Aorta (tissue), 5 donors: ENCODE measurements at regions of chr5 and their contacts with region 1.

Region 1: DNA sequence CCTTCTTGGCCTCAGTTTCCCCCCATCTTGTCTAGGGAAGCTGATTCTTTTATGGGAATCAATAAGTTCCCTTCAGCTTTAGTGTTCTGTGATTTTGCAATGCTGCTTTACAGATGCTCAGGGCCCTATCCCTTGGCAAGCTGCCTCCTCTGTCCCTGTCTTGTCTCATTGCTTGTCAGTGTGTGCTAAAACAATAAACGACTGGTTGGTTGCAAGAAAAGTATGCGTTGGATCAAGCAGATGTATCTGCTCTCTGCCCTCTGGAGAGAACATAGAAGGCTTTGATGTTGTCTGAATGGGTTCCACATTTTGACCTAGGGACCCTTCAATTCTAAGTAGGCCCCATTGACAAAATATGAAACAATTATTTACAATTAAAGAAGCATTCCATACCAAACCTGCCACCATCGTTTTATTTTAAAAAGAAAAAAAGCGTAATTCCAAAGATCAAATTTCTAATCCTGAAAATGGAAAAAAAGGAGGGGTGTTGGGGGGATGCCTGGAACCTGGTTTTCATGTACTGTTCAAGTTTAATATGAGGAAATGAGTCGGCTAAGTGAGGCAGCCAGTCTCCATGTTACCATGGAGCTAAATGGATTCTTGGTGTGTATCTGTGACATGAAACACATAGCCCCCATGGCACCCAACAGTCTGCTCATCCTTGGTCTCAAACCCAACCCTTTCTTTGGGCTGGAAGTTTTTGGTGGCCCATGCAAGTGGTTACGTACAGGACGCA is 31.2 kb upstream of the TARS1 start:
- DNase-seq: no peak
- ATAC-seq: peak; percentile 51
- H3K4me3 ChIP-seq: no peak overlapping the region
- H3K27ac ChIP-seq: no peak overlapping the region
- H3K4me1 ChIP-seq: no peaks in the 10 kb centered on the region
- H3K27me3 ChIP-seq: no peaks in the 10 kb centered on the region

Region 2: DNA sequence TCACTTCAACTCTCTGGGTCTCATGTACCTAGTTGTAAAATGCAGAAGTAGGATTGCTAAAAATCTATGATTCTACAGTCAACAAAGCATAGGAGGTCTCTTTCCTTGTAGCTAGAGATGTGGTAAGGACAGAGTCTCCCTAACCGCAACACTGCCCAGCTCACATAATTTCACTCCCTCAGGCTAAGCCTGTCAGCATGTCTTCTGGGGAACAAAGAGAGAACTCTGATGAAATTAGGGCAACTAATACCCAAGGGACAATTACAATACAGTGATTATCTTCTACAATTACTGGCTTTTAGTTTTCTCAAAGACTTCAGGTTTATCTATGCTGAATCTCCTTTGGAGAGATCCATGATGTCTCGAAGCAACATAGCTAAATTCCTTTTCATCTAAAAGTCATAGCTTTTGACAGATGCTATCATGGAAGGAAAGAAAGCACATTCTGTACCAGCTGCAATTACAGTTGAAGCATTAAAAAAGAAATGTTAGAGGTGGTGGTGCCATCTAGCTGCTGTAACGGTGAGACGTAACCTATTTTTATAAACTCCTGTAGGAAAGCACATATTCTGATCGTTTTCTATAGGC is 109.9 kb before region 1 on chr5:
- intact Hi-C with region 1: loop called in 1 of 2 experiments (anchors 10 kb)
- DNase-seq: no peak
- ATAC-seq: peak; percentile 74
- H3K4me3 ChIP-seq: no peak overlapping the region
- H3K27ac ChIP-seq: no peak overlapping the region
- H3K4me1 ChIP-seq: no peaks in the 10 kb centered on the region
- H3K27me3 ChIP-seq: no peaks in the 10 kb centered on the region

Region 3: DNA sequence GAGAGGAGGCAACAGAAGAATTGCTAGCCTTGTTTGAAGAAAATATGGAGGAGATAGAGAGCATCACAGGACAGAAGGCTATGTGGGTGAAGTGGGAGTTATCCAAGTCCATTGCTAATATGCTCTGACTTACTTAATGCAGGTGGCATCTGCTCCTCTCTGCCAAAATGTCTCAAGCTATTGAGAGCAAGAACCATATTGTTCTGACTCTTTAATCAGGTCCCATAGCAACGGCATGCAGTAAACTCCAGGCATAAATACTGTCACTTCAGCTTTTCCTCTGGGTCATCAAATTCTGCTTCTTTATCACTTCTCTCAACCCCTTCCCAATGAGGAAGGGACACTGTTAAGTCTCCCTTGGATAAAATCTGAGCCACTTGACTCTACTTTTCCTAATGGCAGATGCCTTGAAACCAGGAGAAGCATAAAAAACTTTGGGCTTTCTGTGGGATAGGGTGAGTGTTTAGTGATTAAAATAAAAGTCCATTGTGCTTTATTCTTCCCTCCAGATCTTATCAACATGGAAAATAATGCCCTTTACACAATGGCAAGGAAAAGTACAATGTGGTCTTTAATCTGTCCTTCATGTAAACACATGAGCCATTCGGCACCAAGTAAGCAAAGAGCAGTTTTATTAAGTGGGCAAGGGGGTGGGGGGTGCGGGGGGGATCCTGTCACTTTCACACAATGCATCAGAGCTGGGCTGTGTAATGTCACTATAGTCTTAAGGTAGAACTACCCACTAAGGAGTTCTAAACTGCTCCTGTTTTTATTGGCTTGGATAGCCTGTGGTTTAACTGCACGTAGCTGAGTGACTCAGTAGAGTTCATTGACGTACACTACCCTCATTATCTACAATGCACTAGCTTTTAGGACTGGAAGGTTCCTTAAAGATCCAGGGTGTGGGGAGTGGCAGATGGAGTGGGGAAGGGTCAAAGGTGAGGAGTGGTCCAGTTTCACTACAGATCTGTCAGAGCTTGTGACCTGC is 39.8 kb before region 1 on chr5:
- intact Hi-C with region 1: loop called in 1 of 2 experiments (anchors 5 kb)
- DNase-seq: no peak
- ATAC-seq: peak; percentile 83
- H3K4me3 ChIP-seq: no peak overlapping the region
- H3K27ac ChIP-seq: no peak overlapping the region
- H3K4me1 ChIP-seq: no peaks in the 10 kb centered on the region
- H3K27me3 ChIP-seq: no peaks in the 10 kb centered on the region